ENCODE measurements at regions of chr1 and their contacts with region 1.

Region 1: GRCh38 chr1:245156081-245156735 is 1.4 kb downstream of the KIF26B start:
- DNase-seq: peak; percentile 75 to 95
- H3K4me3 ChIP-seq: peak overlapping the region; percentile 41
- CTCF ChIP-seq: no peak
- POLR2A ChIP-seq: no peak

Region 2: DNA sequence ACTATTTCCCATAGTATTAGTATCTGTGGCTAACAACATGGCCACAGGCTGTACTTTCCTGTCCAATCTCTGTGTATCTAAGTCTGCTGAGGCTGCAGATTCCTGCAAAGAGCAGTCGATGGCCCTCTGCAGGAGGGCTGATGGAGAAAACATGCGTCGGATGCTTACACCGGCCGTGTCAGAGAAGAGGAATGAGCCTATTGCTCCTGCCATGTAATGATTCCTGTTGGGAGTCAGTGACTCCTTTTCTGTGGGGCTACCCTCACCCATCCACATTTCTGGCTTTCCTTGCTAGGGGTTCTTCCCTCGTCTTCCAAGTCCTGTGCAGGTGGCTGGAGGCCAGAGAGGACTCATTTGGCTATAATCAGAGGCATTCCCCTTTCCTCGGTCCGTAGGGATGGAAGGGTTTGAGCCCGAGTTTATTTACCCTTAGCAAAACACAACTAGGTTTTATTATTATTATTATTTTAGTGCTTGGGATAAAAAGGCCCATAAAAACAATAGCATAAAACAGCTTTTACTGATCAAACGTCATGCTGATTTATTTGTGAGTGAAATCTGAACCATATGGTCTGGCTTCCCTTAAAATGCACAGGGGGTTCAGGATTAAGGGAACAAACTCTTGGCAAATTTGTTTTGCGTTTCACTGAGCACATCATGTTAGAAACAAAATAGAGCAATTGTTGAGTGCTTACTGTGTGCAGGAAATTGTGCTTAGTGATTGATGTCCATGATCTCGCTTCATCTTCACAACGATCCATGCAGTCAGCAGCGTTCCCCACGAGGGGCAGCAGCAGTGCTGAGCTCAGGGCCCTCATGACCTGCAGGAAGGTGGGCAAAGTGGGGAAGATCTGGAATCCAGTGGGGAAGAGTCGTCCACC is 69.4 kb after region 1 on chr1:
- intact Hi-C with region 1: no loop called
- DNase-seq: peak in 1 of 2 donors; percentile 65
- H3K4me3 ChIP-seq: no peak overlapping the region
- CTCF ChIP-seq: no peak
- POLR2A ChIP-seq: no peak

Region 3: DNA sequence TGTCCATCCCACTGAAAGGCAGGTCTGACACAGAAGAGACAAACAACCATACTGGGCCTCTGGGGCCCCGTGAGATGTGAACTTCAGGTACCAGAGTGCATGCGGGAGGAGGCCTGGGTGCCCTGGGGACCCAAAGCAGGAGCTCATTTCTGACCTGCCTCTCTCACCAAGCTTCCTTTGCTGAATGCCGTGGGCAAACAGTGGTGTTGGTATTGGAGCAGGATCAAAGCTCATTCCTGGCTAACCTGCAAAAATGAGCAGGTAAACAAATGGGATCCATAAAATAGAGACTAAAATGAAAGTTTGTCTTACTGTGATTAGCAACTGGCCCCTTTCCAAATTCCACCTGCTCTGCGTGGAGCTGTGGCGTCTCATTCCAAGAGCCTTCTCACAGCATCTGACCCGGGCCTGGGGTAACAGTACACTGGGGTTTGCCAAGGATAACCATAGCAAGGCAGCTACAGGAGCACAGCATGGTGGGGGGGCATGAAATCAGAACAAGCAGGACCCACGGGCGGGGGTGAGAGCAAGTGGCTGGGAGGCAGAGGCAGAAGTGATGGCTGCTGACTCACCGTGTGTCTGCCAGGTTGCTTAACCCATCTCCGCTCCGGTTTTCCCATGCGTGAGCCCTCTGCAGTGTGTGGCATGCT is 102.2 kb after region 1 on chr1:
- intact Hi-C with region 1: no loop called
- DNase-seq: no peak
- H3K4me3 ChIP-seq: no peak overlapping the region
- CTCF ChIP-seq: no peak
- POLR2A ChIP-seq: no peak

Region 4: GRCh38 chr1:246002725-246003441 is 846.7 kb after region 1 on chr1:
- intact Hi-C with region 1: loop called (anchors 2 kb)
- DNase-seq: peak; percentile 88 to 97
- H3K4me3 ChIP-seq: no peak overlapping the region
- CTCF ChIP-seq: no peak
- POLR2A ChIP-seq: no peak

Region 5: GRCh38 chr1:246497331-246497915 is 1341.2 kb after region 1 on chr1:
- intact Hi-C with region 1: loop called (anchors 10 kb)
- DNase-seq: no peak
- H3K4me3 ChIP-seq: no peak overlapping the region
- CTCF ChIP-seq: peak in 1 of 3 donors; percentile 64
- POLR2A ChIP-seq: no peak

Region 6: DNA sequence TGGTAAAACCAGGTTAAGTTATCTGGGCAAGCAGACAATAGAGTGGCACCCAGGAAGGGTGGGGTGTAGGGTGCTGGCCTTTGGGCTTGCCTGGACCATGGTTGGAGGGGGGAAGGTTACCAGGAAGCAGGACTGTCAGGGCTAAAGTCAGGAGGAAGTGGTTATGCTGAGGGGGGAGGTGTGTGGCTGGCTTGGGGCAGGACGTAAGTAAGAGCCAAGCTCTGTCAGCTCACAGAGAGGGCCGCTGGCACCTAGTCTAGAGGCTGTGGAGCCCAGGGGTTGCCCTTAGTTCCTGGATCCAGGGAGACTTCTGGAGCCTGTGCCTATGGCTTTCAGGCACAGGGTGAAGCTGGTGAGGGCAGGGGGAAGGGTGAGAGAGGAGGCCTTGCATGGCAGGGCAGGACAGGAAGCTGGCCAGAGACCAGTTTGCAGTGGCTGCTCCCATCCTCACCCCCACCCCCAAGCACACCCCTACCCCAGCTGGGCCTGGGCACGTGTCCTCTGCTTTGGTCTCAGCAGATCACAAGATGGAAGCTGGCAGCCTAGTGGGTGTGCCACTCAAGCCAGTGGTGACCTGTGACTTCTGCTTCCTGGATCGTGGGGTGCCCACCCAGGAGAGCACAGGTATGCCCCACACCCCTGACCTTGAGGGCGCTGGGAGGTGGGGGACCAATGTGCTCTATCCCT is 1371.3 kb after region 1 on chr1:
- intact Hi-C with region 1: no loop called
- DNase-seq: peak in 1 of 2 donors; percentile 72
- H3K4me3 ChIP-seq: no peak overlapping the region
- CTCF ChIP-seq: no peak
- POLR2A ChIP-seq: no peak

Measured in lower leg skin (tissue), 4 donors.